Right ventricle myocardium inferior (tissue), 1 donor: ENCODE measurements at regions of chr1 and their contacts with region 1.

Region 1: DNA sequence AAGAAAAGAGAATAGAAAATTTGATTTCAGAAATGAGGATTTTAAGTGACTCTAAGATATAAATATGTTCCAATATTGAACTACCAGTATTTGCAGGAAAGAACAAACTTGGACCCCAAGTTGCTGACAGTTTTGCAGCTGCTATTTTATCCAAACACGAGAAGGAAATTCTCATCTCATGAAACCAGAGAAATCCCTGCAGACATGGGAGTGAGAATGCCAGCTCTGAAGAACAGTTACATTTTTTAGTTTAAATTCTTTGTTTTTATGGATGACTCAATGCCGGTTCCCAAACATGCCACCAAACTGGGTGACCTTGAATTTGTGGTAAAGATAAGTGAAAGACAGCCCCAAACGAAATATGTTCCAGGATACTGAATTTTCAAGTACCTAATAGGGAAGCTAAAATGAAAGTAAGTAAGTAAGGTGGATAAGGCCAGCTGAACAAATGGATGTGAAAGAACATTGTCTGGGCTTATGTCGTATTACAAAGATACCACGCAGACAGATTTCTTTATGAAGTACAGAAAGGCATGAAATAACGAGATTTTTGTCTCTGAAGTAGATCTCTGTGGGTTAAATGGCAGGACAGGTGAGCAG is 19.9 kb downstream of the TLR5 start:
- DNase-seq: no peak
- ATAC-seq: no peak

Region 2: GRCh38 chr1:222654849-222655248 is 468.3 kb before region 1 on chr1:
- intact Hi-C with region 1: no loop called
- DNase-seq: no peak
- ATAC-seq: peak; percentile 46

Region 3: GRCh38 chr1:222792744-222793143 is 330.4 kb before region 1 on chr1:
- intact Hi-C with region 1: loop called (anchors 5 kb)
- DNase-seq: no peak
- ATAC-seq: no peak

Region 4: GRCh38 chr1:222852326-222852725 is 270.8 kb before region 1 on chr1:
- intact Hi-C with region 1: no loop called
- DNase-seq: no peak
- ATAC-seq: no peak